MCF 10A (cell line): ENCODE measurements at regions of chr6 and their contacts with region 1.

Region 1: DNA sequence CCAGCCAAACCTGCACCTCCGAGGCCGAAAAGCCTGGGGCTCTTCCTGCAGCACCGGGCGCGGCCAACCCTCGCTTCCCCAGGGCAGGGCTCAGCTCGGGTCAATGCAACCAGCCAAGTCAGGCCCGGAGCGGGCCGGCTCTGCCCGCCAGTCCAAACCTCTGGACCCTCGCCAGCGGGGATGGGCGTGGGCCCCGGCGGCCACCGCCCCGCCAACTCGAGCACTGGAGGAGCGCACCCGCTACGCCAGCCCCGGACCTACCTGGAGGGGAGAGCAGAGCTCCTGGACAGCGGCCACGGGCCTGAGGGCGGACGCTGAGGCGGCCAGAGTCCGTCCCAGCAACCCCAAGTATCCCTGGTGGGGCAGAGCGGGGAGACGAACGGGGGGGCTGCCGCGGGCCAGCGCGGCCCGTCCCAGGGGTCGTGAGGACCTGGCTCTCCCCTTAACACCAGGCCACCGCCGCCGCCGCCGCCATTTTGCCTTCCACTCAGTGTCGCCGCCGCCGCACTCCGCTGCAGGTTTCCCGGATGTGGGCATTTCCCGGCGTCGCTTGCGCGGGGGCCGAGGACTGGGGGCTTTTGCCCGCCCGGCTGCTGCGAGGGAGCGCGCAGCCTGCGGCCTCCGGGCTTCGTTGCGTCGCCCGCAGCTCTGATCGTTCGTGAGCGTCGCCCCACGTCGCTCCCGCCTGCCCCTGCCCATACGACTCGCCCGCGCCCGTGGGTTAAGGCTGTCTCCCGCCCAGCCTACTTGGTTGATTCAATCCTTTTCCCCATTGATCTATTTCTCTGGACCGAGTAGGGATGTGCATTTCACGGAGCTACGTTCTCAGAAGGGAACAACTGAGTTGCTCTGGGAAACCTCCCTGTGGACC is at the start of gene LATS1:
- DNase-seq: peak; percentile 93
- H3K4me3 Mint-ChIP-seq: peak within 1 kb of the TSS; percentile 83
- H3K27ac Mint-ChIP-seq: peak within 1 kb of the TSS; percentile 82
- H3K4me1 Mint-ChIP-seq: no peaks in the 10 kb centered on the region
- H3K27me3 Mint-ChIP-seq: no peaks in the 10 kb centered on the region
- CTCF ChIP-seq: no peak
- total RNA-seq, gene LATS1: 28.8 and 34.3 TPM in 2 replicates

Region 2: DNA sequence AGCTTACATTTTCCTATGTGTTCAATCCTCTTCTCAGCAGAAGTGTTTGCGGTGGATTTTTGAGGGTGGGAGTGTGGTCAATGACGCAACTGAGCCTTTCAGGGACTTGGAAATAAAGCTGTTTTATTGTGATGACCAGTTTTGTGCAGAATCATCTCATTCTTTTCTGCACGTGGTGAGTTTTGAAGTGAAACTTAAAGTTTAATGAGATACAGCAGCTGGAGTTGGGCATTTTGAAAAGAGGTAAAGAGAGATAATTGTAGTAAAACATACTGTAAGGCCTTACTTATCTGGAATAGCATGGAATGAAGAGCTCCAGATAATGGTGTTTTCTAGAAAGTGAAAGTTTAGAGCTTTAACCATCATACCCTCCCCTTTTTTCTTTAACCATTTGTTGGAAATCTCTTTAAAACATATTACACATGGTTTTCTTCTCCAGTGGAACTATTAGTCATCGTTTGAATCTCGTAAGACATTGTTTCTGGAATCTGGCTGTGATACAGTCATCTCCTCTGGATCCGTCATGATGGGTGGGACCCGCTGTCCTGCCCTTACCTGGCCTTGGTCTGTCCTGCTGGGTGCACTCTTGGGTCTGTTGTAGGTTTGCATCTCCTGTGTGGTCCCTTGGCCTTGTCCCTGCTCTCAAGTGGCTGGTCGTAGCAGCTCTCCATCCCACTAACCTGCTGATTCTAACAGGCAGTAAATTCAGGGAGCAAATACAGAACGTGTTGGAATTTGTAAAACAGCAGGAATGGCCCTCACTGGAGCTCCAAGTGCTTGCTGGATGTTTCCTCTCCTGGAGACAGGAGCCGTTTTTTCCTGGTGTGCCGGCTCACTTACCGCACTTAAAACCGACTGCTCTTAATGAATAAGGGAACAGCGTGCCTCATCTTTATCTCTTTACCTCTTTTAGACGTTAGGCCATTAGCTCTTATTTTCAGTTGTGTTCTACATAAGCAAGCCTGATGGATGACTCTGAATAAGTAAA is 941.2 kb before region 1 on chr6:
- CTCF ChIA-PET with region 1: no interaction called
- POLR2A ChIA-PET with region 1: no interaction called
- intact Hi-C with region 1: no loop called
- DNase-seq: peak; percentile 70
- H3K4me3 Mint-ChIP-seq: peak overlapping the region; percentile 55
- H3K27ac Mint-ChIP-seq: no peak overlapping the region
- H3K4me1 Mint-ChIP-seq: peaks cover 26% of the 10 kb centered on the region
- H3K27me3 Mint-ChIP-seq: no peaks in the 10 kb centered on the region
- CTCF ChIP-seq: no peak

Region 3: DNA sequence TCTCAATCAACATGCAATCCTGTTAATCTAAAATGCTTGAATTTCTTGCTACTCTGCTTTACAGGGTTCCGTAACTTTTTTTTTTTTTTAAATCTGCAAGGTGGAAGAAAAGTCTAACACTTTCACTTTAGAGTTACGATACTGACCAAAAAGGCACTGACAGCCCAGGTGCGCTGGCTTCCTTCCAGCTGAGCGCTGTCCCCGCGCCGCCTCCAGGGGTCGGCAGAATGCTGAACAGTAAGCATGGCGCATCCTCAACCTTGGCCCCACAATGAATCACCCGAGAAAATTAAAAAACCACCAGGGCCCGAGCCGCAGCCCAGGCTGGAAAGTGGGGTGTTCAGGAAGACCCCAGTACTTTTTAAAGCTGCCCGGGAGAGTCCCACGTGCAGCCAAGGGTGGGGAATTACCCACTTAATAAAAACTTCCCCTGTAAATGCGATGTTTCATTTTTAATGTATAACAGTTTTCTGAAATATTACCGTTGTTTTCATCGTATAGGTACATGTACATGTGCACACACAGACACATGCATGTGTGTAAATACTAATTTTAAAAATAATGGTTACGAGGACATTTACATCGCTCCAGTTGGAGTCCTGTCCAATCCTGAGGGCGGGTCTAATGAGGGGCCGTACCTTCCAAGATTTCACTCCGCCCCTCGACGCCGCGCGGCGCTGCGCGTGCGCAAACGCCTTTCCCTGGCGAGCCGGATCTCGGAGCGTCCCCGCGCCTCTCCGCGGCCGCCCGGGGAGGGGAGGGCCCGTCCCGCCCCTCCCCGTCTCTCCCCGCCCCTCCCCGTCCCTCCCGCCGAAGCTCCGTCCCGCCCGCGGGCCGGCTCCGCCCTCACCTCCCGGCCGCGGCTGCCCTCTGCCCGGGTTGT is 152.1 kb before region 1 on chr6 and contains the start of gene GINM1:
- CTCF ChIA-PET with region 1: no interaction called
- POLR2A ChIA-PET with region 1: interaction called, 43 read pairs
- intact Hi-C with region 1: loop called (anchors 2 kb)
- DNase-seq: peak; percentile 95
- H3K4me3 Mint-ChIP-seq: peak within 1 kb of the TSS; percentile 87
- H3K27ac Mint-ChIP-seq: peak within 1 kb of the TSS; percentile 61
- H3K4me1 Mint-ChIP-seq: peaks cover 7% of the 10 kb centered on the region
- H3K27me3 Mint-ChIP-seq: no peaks in the 10 kb centered on the region
- CTCF ChIP-seq: peak; percentile 61
- total RNA-seq, gene GINM1: 27.7 and 29.6 TPM in 2 replicates

Region 4: DNA sequence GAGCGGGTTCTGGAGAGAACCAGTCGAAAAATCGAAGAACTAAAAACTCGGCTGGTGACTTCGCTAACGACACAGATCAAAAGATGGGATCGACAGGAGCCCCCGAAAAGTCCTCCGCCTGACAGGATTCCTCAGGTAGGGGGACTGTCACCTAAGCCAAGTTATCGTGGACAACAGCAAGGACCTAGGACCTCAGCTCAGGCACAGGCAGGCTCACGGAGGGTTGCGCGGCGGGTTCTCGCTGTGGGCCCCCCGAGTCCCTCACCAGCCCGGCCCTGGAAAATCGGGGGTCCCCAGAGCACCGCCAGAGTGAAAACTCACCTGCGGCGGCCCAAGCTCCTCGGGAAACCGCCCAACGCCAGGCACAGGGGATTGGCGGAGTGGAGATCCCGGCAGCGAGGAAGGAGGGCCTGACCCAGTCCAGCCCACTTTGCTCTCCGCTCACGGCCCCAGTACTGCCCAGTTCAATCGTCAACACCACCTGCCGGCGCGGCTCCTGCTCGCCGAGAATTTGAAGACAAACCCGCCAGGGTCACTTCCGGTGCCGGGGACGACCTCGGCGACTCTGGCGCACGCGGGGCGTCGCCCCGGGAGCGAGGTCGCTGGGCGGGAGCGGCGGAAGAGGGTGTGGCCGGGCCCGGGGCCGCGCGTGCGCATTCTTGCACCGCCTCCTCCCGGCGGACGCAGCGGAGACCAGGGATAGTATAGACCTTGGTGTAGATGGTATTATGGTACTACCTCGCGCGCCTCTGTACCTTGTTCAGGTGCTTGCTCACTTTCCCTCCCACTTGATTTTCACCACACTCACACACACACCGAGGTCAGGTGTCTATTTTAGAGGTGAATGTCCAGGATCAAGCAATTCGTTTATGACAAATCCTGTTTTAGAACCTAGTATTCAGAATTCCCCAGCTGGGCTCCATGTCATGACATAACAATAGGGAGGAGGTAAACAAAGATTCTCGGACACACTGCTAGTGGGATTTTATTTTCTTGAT is 69.4 kb before region 1 on chr6 and contains the start of gene KATNA1:
- CTCF ChIA-PET with region 1: no interaction called
- POLR2A ChIA-PET with region 1: interaction called, 72 read pairs
- intact Hi-C with region 1: loop called (anchors 1 kb)
- DNase-seq: peak; percentile 93
- H3K4me3 Mint-ChIP-seq: peak within 1 kb of the TSS; percentile 85
- H3K27ac Mint-ChIP-seq: peak within 1 kb of the TSS; percentile 82
- H3K4me1 Mint-ChIP-seq: peaks cover 6% of the 10 kb centered on the region
- H3K27me3 Mint-ChIP-seq: no peaks in the 10 kb centered on the region
- CTCF ChIP-seq: no peak
- total RNA-seq, gene KATNA1: 23.2 and 25.8 TPM in 2 replicates

Region 5: DNA sequence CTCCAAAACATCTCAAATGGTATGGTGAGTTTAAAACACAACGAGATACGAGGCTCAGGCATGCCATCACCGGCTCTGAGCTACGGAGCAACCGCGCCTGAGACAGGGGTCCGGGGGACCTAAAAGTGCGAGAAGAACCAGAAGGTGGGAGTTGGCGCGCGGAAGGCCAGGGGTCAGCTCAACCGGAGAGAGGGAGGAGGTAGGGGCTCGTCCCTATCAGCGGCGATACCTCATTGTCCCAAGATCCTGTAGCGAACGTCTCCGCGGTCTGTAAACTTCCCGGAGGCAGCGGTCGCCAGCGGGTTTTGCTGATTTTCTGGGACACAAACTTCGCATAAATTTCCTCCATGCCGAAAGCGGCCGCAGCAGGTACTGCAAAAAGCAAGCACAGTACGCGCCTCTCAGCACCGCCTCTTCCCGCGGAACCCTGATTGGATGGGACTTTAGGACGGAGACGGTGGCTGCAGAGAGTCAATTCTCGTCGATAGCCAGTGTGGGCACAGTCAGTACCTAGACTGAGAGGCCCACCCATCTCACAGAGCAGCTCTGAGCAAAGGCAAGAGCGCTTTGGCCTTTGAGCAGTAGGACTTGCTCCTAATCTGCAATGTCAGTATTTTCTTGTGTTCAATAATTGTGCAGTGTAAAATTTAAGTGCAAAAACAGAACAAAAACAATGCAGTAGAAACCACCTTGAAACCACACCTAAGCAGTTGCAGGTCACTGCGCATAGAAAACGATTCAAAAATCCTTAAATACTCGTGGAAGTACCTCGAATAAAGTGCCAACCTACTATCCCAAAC is 28.5 kb after region 1 on chr6 and contains the start of gene NUP43:
- CTCF ChIA-PET with region 1: interaction called, 8 read pairs
- POLR2A ChIA-PET with region 1: interaction called, 138 read pairs
- intact Hi-C with region 1: no loop called
- DNase-seq: peak; percentile 94
- H3K4me3 Mint-ChIP-seq: peak within 1 kb of the TSS; percentile 94
- H3K27ac Mint-ChIP-seq: peak within 1 kb of the TSS; percentile 80
- H3K4me1 Mint-ChIP-seq: peaks cover 8% of the 10 kb centered on the region
- H3K27me3 Mint-ChIP-seq: no peaks in the 10 kb centered on the region
- CTCF ChIP-seq: peak; percentile 33
- total RNA-seq, gene NUP43: 47.8 and 50.5 TPM in 2 replicates